HEK293 (cell line): ENCODE measurements at regions of chr3 and their contacts with region 1.

Region 1: DNA sequence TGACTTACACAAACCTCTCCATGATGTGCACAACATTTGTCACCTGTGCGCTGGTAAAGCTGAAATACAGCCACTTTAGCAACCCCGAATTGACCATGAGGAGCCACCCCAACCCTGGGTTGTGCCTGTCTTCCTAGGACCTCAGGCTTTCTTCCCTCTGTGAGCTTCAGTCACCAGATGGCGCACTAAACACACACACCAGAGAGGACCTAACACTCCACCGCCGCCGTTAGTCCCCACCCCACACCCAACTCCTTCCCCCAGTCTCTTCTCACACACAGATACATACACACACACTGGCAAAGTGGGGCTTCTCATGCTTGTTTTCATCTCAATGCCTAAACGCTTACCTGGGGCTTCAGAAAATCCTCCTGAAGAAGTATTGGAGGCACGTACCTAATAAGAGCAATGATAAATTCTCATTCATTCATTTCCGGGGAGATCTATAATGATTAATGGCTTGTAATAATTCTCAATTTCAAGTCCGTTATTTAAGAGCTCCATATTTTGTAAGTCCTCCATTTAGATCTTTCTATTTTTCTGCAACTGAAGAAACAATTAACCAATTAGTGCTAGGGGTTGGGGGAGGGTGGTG is 2.1 kb upstream of the CCDC80 start:
- H3K4me3 ChIP-seq: no peak overlapping the region
- H3K27ac ChIP-seq: no peak overlapping the region
- H3K4me1 ChIP-seq: no peaks in the 10 kb centered on the region
- CTCF ChIP-seq: peak; percentile 88

Region 2: DNA sequence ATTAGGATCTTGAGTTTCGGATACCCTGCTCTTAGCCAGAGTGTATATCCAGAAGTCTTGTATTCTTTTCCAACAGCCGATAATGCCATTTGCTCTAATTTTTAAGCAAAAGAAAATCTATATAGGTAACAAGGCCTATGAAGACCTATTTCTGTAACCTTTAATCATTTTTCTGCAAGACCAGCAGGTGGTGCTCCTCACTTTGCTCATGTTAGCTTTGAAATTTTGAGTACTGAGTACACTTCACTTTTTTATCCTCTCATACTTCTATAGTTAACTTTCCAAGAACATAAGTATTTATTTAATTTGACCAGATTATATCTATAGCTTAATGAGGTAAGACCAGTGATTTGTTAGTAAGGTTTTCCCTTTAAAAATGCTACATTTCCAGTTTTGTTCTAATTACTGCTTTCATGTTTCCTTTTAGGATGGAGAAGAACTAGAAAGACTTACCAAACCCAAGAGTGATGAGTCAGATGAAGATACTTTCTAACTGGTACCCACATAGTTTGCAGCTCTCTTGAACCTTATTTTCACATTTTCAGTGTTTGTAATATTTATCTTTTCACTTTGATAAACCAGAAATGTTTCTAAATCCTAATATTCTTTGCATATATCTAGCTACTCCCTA is 60.6 kb before region 1 on chr3:
- CTCF ChIA-PET with region 1: interaction called, 31 read pairs
- POLR2A ChIA-PET with region 1: interaction called, 3 read pairs
- H3K4me3 ChIP-seq: no peak overlapping the region
- H3K27ac ChIP-seq: no peak overlapping the region
- H3K4me1 ChIP-seq: no peaks in the 10 kb centered on the region
- CTCF ChIP-seq: no peak

Region 3: GRCh38 chr3:112667599-112667998 is 24.6 kb after region 1 on chr3:
- CTCF ChIA-PET with region 1: no interaction called
- POLR2A ChIA-PET with region 1: no interaction called
- H3K4me3 ChIP-seq: no peak overlapping the region
- H3K27ac ChIP-seq: no peak overlapping the region
- H3K4me1 ChIP-seq: peaks cover 5% of the 10 kb centered on the region; the same call in 1 of the 2 replicates
- CTCF ChIP-seq: no peak

Region 4: GRCh38 chr3:112699436-112699978 is 56.5 kb after region 1 on chr3:
- CTCF ChIA-PET with region 1: interaction called, 30 read pairs
- POLR2A ChIA-PET with region 1: interaction called, 3 read pairs
- H3K4me3 ChIP-seq: no peak overlapping the region
- H3K27ac ChIP-seq: no peak overlapping the region
- H3K4me1 ChIP-seq: no peaks in the 10 kb centered on the region
- CTCF ChIP-seq: no peak

Region 5: DNA sequence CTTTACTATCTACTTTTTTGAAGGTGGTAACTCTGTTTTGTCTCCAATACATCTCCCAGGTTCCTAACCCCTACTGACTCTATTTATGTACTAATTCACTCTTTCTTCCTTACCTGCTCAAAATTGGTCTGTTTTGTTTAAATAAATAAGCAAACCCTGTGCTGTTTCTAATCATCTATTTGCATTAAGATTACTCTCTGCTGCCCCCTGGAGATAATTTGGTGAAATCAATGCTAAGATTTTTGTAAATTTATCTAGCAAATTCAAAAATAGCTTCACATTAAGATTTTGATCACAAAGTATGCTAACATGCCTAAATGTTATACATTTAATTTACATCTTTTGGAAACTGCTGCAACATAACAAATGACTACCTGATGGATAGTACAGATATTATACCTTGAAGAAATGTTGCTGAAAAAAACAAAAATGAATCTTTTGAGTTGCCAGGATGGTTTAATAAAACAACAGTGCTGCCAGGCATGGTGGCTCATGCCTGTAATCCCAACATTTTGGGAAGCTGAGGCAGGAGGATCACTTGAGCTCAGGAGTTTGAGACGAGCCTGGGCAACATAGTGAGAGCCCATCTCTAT is 336.3 kb after region 1 on chr3:
- CTCF ChIA-PET with region 1: interaction called, 24 read pairs
- POLR2A ChIA-PET with region 1: no interaction called
- H3K4me3 ChIP-seq: no peak overlapping the region
- H3K27ac ChIP-seq: no peak overlapping the region
- H3K4me1 ChIP-seq: no peaks in the 10 kb centered on the region; the same call in 1 of the 2 replicates
- CTCF ChIP-seq: no peak; the same call in 1 of the 2 replicates

Region 6: DNA sequence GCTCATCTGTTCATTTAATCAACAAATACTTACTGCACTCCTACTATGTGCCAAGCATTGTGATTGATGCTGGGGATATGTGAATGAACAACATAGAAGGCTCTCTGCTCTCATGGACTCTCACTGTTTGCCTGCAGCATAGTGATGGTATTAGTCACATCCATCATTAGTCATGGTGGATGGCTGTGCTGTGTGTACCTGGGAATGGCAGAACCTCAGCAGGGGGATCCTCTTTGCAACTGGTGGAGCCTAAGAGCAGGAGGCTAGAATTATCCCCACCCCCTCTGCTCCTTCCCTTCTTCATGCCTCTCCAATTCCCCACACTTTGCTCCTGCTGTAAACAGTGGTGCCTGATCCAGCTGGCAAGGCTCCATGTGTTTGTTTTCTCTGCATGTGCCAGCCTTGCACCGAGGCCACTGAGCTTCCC is 588.8 kb after region 1 on chr3:
- CTCF ChIA-PET with region 1: no interaction called
- POLR2A ChIA-PET with region 1: no interaction called
- H3K4me3 ChIP-seq: no peak overlapping the region
- H3K27ac ChIP-seq: no peak overlapping the region
- H3K4me1 ChIP-seq: 0 out of 2 replicates have a peak, but pooled peaks cover 3% of the 10 kb centered on the region
- CTCF ChIP-seq: no peak